ENCODE measurements at regions of chr1 and their contacts with region 1.

Region 1: DNA sequence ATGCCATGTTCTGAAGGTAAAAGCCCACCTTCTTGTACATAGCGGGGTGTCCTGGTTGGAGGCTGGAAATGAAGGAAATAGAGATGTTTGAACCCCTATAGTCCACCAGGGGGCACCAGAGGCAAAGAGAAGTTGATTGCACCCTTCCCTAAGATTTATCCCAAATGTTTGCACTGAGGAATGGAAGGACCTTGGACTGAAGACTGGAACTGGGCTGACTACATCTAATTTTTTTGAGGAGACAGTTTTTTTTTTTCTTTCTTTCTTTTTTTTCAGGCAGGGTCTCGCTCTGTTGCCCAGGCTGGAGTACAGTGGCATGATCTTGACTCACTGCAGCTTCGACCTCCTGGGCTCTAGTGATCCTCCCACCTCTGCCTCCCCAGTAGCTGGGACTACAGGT is 55.3 kb upstream of the EIF4G3 start:
- DNase-seq: peak; percentile 62
- CTCF ChIP-seq: peak; percentile 60

Region 2: GRCh38 chr1:20440785-20441200 is 791.3 kb before region 1 on chr1:
- CTCF ChIA-PET with region 1: no interaction called
- POLR2A ChIA-PET with region 1: no interaction called
- DNase-seq: peak; percentile 66
- CTCF ChIP-seq: no peak

Region 3: GRCh38 chr1:20811916-20812315 is 420.1 kb before region 1 on chr1:
- CTCF ChIA-PET with region 1: no interaction called
- POLR2A ChIA-PET with region 1: no interaction called
- DNase-seq: no peak
- CTCF ChIP-seq: no peak

Region 4: DNA sequence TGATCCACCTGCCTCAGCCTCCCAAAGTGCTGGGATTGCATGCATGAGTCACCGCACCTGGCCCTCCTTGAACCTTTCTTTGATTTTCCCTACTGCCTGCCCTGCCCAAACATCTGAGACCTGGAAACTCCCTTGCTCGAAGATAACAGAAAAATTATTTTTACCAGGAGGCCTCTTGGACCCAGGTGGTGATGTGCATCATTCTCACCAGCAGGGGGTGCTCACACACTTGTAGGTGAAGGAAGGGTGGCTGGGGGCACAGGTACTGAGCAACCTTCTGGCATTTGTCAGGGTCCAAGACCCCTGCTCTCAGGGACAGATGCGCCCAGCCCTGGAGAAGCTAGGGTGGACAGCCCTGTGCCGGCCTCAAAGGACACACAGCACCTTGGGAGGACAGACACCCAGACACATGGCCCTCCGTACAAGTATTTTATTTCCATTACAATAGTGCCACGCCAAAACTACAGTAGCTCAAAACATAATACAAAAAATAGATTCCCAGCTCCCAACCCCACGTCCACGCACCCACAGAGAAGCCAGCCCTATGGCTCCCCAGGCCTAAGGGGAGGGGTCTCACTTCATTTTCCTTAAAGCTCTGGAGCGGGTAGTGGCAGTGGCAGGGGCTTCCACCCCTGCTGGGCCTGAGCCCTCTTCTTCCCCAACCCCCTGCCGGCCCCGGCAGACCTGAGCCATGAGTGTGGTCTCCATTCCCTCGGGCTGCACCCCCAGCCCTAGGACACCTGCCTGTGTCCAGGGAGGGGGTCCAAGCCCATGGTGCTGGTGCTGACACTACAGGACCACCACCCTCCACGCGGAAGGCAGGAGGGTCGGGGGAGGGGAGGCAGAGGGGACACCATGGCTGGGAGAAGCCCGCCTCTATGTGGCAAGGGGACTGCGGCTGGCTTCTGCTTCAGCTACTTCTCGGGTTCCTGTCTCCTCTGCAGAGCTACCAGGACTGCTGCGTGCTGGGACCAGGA is 14.9 kb before region 1 on chr1:
- CTCF ChIA-PET with region 1: interaction called, 84 read pairs
- POLR2A ChIA-PET with region 1: no interaction called
- DNase-seq: peak; percentile 75
- CTCF ChIP-seq: peak; percentile 75

Region 5: DNA sequence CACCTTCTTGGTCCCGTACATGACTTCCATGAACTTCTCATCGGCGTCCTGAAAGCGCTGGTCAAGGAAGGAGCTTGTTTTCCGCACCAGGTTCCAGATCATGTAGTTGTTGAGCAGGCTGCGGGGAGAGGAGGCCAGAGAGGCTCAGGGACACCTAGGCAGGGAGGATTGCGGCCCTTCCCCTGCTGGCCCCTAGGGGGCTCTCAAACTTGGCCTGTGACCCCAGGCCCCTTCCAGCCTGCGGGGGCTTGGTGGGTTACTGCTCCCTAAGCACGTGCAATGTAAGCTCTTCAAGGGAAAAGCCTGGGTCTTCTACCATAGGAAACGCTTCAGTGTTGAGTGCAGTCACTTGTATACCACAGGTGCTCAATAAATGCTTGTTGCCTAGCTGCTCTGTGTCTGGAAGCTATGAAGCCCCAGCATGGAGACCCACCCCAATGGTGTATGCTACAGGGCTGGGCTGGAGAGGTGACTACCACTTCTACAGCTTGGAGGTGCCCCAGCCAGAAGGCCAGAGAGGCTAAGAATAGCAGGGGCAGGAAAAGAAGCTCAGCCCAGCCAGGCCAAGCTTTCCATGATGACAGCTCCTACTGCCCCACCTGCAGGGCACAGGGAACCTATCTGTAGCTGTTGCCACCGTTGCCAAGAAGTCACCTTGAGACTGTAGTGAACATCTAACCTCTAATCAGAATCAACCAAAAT is 13.1 kb after region 1 on chr1:
- CTCF ChIA-PET with region 1: interaction called, 32 read pairs
- POLR2A ChIA-PET with region 1: no interaction called
- DNase-seq: no peak
- CTCF ChIP-seq: peak; percentile 3

Region 6: DNA sequence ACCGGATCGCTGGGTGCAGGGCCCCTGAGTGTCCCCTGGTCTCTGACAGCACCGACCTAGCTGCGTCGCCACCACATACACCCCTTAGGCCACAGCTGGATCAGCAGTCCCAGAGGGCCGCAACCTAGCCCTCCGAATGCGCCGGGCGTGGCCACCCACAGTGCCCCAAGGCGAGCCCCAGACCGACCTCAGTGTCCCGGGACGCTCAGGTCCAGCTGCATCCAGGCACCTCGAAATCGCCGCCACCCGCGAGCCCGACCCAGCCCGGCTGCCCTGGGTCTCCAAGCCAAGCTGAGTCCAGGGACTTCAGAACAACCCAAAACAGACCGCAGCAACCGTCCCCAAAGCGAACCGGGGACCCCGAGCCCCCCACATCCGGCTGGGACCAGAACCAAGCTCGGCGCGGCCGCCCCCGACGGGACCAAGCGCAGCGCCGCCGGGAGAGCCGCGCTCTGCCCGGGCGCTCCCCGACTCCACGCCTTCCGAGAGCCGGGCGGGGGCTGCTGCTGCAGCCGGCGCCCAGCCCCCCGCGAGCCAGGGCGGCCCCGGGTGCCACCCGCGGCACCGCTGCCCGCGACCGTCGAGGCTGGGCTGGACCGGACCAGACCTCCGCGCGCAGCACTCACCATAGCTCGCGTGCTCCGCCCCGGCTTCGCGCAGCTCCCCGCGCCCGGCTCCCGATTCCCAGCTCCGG is 112.9 kb after region 1 on chr1:
- CTCF ChIA-PET with region 1: interaction called, 13 read pairs
- POLR2A ChIA-PET with region 1: no interaction called
- DNase-seq: no peak
- CTCF ChIP-seq: no peak